Heart left ventricle (tissue), 16 donors: ENCODE measurements at regions of chr20 and their contacts with region 1.

Region 1: GRCh38 chr20:54692168-54692887 is 216.9 kb downstream of the DOK5 start:
- DNase-seq: no peak
- ATAC-seq: no peak
- H3K4me3 ChIP-seq: no peak overlapping the region
- H3K27ac ChIP-seq: no peak overlapping the region
- H3K4me1 ChIP-seq: no peaks in the 10 kb centered on the region
- H3K27me3 ChIP-seq: no peaks in the 10 kb centered on the region
- CTCF ChIP-seq: no peak
- POLR2A ChIP-seq: no peak

Region 2: GRCh38 chr20:54772913-54773642 is 80.8 kb after region 1 on chr20:
- intact Hi-C with region 1: loop called in 1 of 10 experiments (anchors 10 kb)
- DNase-seq: no peak
- ATAC-seq: no peak
- H3K4me3 ChIP-seq: no peak overlapping the region
- H3K27ac ChIP-seq: no peak overlapping the region
- H3K4me1 ChIP-seq: no peaks in the 10 kb centered on the region
- H3K27me3 ChIP-seq: peaks cover 0 to 4% (median 0%) of the 10 kb centered on the region in 9 donors
- CTCF ChIP-seq: no peak
- POLR2A ChIP-seq: no peak